Activated CD4-positive, alpha-beta memory T cell treated with anti-CD3 and anti-CD28 coated beads for 36 hours (primary cell): ENCODE measurements at regions of chr6 and their contacts with region 1.

Region 1: DNA sequence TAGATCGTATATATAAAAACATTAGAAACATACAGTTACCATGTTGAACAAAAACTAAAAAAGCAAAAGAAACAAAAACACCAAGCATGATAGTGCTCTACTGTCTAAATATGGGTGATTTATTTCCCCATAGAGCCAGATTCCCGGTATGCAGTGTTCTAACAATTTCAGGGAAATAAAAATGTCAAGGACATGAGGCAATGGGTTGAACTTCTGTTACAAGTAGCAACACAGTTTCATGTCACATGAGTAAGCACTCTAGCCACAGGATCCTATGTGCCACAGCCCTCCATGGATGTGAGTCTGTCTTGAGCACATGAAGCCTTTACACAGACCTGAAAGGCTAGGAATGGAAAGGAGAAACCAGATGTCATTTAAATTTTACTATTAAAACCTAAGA is 96.0 kb downstream of the MAP3K5 start:
- DNase-seq: no peak
- H3K4me3 Mint-ChIP-seq: no peak overlapping the region
- H3K27ac Mint-ChIP-seq: no peak overlapping the region
- H3K4me1 Mint-ChIP-seq: peaks cover 18% of the 10 kb centered on the region
- H3K27me3 Mint-ChIP-seq: no peaks in the 10 kb centered on the region

Region 2: GRCh38 chr6:136628996-136629395 is 67.2 kb before region 1 on chr6:
- CTCF ChIA-PET with region 1: no interaction called
- POLR2A ChIA-PET with region 1: no interaction called
- intact Hi-C with region 1: no loop called
- DNase-seq: no peak
- H3K4me3 Mint-ChIP-seq: no peak overlapping the region
- H3K27ac Mint-ChIP-seq: no peak overlapping the region
- H3K4me1 Mint-ChIP-seq: peaks cover 7% of the 10 kb centered on the region
- H3K27me3 Mint-ChIP-seq: no peaks in the 10 kb centered on the region

Region 3: GRCh38 chr6:136669299-136669699 is 26.9 kb before region 1 on chr6:
- CTCF ChIA-PET with region 1: no interaction called
- POLR2A ChIA-PET with region 1: no interaction called
- intact Hi-C with region 1: no loop called
- DNase-seq: no peak
- H3K4me3 Mint-ChIP-seq: no peak overlapping the region
- H3K27ac Mint-ChIP-seq: no peak overlapping the region
- H3K4me1 Mint-ChIP-seq: peaks cover 2% of the 10 kb centered on the region
- H3K27me3 Mint-ChIP-seq: no peaks in the 10 kb centered on the region

Region 4: GRCh38 chr6:136719280-136720044 is 23.2 kb after region 1 on chr6:
- CTCF ChIA-PET with region 1: no interaction called
- POLR2A ChIA-PET with region 1: no interaction called
- intact Hi-C with region 1: loop called (anchors 1 kb)
- DNase-seq: no peak
- H3K4me3 Mint-ChIP-seq: no peak overlapping the region
- H3K27ac Mint-ChIP-seq: peak overlapping the region; percentile 55
- H3K4me1 Mint-ChIP-seq: peaks cover 42% of the 10 kb centered on the region
- H3K27me3 Mint-ChIP-seq: no peaks in the 10 kb centered on the region